ENCODE measurements at regions of chr4 and their contacts with region 1.

Region 1: GRCh38 chr4:29309050-29309449 is 1411.1 kb upstream of the PCDH7 start:
- DNase-seq: peak; percentile 70
- H3K4me3 ChIP-seq: no peak overlapping the region
- H3K27ac ChIP-seq: peak overlapping the region; percentile 78
- H3K4me1 ChIP-seq: peaks cover 45% of the 10 kb centered on the region
- H3K27me3 ChIP-seq: no peaks in the 10 kb centered on the region
- CTCF ChIP-seq: no peak
- POLR2A ChIP-seq: no peak

Region 2: DNA sequence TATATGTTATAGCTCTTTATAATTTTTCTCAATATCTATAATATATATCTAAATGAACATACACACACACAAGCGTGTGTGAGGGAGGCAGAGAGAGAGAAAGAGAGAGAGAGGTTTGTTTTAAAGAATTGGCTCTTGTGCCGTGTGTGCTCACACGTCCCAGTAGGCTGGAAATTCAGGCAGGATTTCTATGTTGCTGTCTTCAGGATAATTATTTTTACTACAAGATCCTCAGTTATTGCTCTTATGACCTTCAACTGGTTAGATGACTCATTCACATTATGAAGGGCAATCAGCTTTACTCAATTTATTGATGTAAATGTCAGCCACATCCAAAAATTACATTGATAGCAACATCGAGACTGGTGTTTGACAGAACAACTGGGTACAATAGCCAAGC is 109.6 kb before region 1 on chr4:
- CTCF ChIA-PET with region 1: no interaction called
- POLR2A ChIA-PET with region 1: no interaction called
- dilution Hi-C with region 1: no loop called
- intact Hi-C with region 1: no loop called
- DNase-seq: no peak
- H3K4me3 ChIP-seq: no peak overlapping the region
- H3K27ac ChIP-seq: no peak overlapping the region
- H3K4me1 ChIP-seq: no peaks in the 10 kb centered on the region
- H3K27me3 ChIP-seq: no peaks in the 10 kb centered on the region
- CTCF ChIP-seq: no peak
- POLR2A ChIP-seq: no peak

Region 3: DNA sequence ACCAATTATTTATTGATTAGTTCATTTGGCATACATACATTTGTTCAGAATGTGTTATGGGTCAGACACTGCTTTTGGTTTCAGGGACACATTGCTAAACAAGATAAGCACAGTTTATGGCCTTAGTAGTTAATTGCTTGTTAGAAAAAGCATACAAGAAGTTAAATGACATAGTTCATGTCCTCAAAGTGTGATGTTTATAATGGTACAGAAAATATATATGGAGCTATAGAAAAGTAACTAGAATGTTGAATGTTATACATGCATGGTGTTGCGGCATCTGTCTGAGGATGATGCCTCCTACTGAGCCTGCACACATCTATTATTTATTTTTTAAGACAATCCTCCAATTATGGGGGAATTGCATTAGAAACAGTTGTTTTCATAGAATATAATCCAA is 65.2 kb before region 1 on chr4:
- CTCF ChIA-PET with region 1: no interaction called
- POLR2A ChIA-PET with region 1: no interaction called
- dilution Hi-C with region 1: no loop called
- intact Hi-C with region 1: loop called (anchors 2 kb)
- DNase-seq: no peak
- H3K4me3 ChIP-seq: no peak overlapping the region
- H3K27ac ChIP-seq: no peak overlapping the region
- H3K4me1 ChIP-seq: no peaks in the 10 kb centered on the region
- H3K27me3 ChIP-seq: no peaks in the 10 kb centered on the region
- CTCF ChIP-seq: no peak
- POLR2A ChIP-seq: no peak

Region 4: DNA sequence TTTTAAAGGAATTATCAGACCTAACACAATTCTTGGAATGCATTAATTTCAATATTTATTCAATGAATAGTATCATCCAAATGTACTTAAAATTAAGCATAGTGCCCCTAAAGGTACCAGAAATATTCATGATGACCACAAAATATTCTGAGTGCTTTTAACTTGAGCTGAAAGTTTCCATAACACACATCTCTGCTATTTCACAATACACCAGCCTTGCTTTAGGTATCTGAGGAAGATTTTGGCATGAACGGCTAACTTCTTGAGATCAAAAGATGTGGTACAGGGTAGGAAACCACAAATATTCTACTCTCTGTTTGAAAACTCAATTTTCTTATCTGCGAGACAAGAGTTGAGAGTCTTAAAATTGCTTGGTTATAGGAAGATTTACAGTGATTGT is 872.9 kb after region 1 on chr4:
- CTCF ChIA-PET with region 1: no interaction called
- POLR2A ChIA-PET with region 1: no interaction called
- dilution Hi-C with region 1: no loop called
- intact Hi-C with region 1: no loop called
- DNase-seq: no peak
- H3K4me3 ChIP-seq: no peak overlapping the region
- H3K27ac ChIP-seq: no peak overlapping the region
- H3K4me1 ChIP-seq: no peaks in the 10 kb centered on the region
- H3K27me3 ChIP-seq: no peaks in the 10 kb centered on the region
- CTCF ChIP-seq: no peak
- POLR2A ChIP-seq: no peak

Measured in endothelial cell of umbilical vein (primary cell).